ENCODE measurements at regions of chr16 and their contacts with region 1.

Region 1: GRCh38 chr16:10737068-10737625 is 6.5 kb upstream of the NUBP1 start:
- DNase-seq: peak; percentile 87
- ATAC-seq: peak; percentile 84
- H3K4me3 ChIP-seq: peak overlapping the region in 4 of 5 experiments; percentile 29 to 68 (median 46)
- H3K4me3 Mint-ChIP-seq: peak overlapping the region; percentile 80
- H3K27ac ChIP-seq: peak overlapping the region; percentile 63 to 70
- H3K27ac Mint-ChIP-seq: peak overlapping the region; percentile 85
- H3K4me1 ChIP-seq: peaks cover 23 to 29% of the 10 kb centered on the region in 2 donors
- H3K4me1 Mint-ChIP-seq: peaks cover 44% of the 10 kb centered on the region
- H3K27me3 ChIP-seq: no peaks in the 10 kb centered on the region
- H3K27me3 Mint-ChIP-seq: no peaks in the 10 kb centered on the region
- CTCF ChIP-seq: peak; percentile 96

Region 2: GRCh38 chr16:10256784-10257641 is 480.1 kb before region 1 on chr16:
- CTCF ChIA-PET with region 1: interaction called, 25 read pairs
- POLR2A ChIA-PET with region 1: no interaction called
- intact Hi-C with region 1: loop called (anchors 1 kb)
- DNase-seq: peak; percentile 83
- ATAC-seq: peak; percentile 90
- H3K4me3 ChIP-seq: peak overlapping the region in 1 of 5 experiments; percentile 18
- H3K4me3 Mint-ChIP-seq: peak overlapping the region; percentile 42
- H3K27ac ChIP-seq: peak overlapping the region in 1 of 2 donors; percentile 56
- H3K27ac Mint-ChIP-seq: peak overlapping the region; percentile 70
- H3K4me1 ChIP-seq: peaks cover 31 to 49% of the 10 kb centered on the region in 2 donors
- H3K4me1 Mint-ChIP-seq: peaks cover 45% of the 10 kb centered on the region
- H3K27me3 ChIP-seq: no peaks in the 10 kb centered on the region
- H3K27me3 Mint-ChIP-seq: no peaks in the 10 kb centered on the region
- CTCF ChIP-seq: peak; percentile 87

Region 3: DNA sequence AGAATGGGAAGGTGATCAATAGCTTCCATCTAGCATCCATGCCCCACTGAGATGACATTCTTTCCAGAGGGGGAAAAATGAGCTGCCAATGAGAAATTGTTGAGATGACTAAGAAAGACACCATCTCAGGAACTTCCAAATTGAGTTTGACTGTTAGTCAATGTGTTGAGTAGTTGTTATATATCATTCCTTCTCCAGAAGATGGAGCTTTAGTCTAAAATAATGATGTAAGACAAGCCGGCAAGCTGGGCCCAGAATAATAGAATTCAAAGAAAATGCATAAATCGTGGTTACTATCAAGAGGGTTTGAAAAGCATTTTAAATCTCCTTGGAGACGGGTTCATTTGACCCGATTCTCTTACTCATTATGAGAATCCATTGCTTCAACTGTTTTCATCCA is 422.3 kb before region 1 on chr16:
- CTCF ChIA-PET with region 1: interaction called, 7 read pairs
- POLR2A ChIA-PET with region 1: interaction called, 3 read pairs
- intact Hi-C with region 1: loop called (anchors 5 kb)
- DNase-seq: peak; percentile 47
- ATAC-seq: peak; percentile 46
- H3K4me3 ChIP-seq: no peak overlapping the region
- H3K4me3 Mint-ChIP-seq: peak overlapping the region; percentile 23
- H3K27ac ChIP-seq: no peak overlapping the region
- H3K27ac Mint-ChIP-seq: peak overlapping the region; percentile 73
- H3K4me1 ChIP-seq: peaks cover 18 to 32% of the 10 kb centered on the region in 2 donors
- H3K4me1 Mint-ChIP-seq: peaks cover 28% of the 10 kb centered on the region
- H3K27me3 ChIP-seq: no peaks in the 10 kb centered on the region
- H3K27me3 Mint-ChIP-seq: no peaks in the 10 kb centered on the region
- CTCF ChIP-seq: peak; percentile 33

Region 4: DNA sequence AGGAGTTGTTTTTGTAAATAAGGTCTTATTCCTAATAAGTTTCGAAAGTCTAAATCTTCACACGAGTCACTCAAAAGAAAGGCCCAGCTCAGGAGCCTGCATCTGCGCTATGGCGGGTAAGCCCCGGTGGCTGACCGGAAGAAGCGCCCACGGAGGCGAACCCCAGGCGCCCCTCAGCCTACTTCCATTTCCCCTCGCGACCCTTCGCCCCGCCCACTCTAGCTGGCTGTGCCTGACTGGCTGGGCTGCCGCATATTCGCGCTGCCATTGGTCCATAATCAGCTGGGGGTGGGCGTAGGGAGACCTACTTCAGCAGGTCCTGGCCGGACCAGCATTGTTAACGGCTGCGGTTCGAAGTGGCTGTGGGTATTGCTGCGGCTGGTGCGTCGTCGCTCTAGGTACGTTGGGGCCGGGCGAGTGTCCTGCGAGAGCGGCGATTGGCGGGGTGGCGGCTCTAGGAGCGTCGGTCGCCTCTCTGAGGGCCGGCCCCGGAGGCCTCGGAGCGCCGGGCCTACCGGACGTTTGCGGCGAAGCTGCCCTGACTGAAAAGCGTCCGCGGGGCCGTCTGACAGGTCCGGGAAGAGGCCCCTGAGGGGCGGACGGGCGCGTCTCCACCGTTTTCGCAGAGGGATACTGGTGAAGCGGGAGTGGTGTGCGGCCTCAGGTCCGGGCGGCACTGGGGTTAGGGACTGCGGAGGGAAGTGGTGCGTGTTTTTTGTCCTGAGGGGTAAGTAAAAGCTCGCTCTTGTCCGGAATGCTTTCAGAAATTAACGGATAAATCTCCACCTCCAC is 351.2 kb before region 1 on chr16 and contains the start of gene ATF7IP2:
- CTCF ChIA-PET with region 1: no interaction called
- POLR2A ChIA-PET with region 1: no interaction called
- intact Hi-C with region 1: loop called (anchors 5 kb)
- DNase-seq: peak; percentile 93
- ATAC-seq: peak; percentile 99
- H3K4me3 ChIP-seq: peak within 1 kb of the TSS; percentile 72 to 97 (median 93)
- H3K4me3 Mint-ChIP-seq: peak within 1 kb of the TSS; percentile 100
- H3K27ac ChIP-seq: peak within 1 kb of the TSS; percentile 72 to 86
- H3K27ac Mint-ChIP-seq: peak within 1 kb of the TSS; percentile 99
- H3K4me1 ChIP-seq: peaks cover 11 to 20% of the 10 kb centered on the region in 2 donors
- H3K4me1 Mint-ChIP-seq: peaks cover 45% of the 10 kb centered on the region
- H3K27me3 ChIP-seq: no peaks in the 10 kb centered on the region
- H3K27me3 Mint-ChIP-seq: no peaks in the 10 kb centered on the region
- CTCF ChIP-seq: no peak
- total RNA-seq, gene ATF7IP2: 63.7 and 67.5 TPM in 2 replicates

Region 5: GRCh38 chr16:10521681-10522274 is 215.4 kb before region 1 on chr16:
- CTCF ChIA-PET with region 1: interaction called, 203 read pairs
- POLR2A ChIA-PET with region 1: interaction called, 3 read pairs
- intact Hi-C with region 1: no loop called
- DNase-seq: peak; percentile 72
- ATAC-seq: peak; percentile 80
- H3K4me3 ChIP-seq: no peak overlapping the region
- H3K4me3 Mint-ChIP-seq: no peak overlapping the region
- H3K27ac ChIP-seq: no peak overlapping the region
- H3K27ac Mint-ChIP-seq: no peak overlapping the region
- H3K4me1 ChIP-seq: peaks cover 0 to 3% of the 10 kb centered on the region in 2 donors
- H3K4me1 Mint-ChIP-seq: peaks cover 2% of the 10 kb centered on the region
- H3K27me3 ChIP-seq: no peaks in the 10 kb centered on the region
- H3K27me3 Mint-ChIP-seq: no peaks in the 10 kb centered on the region
- CTCF ChIP-seq: peak; percentile 93

Region 6: GRCh38 chr16:10888320-10888937 is 151.3 kb after region 1 on chr16:
- CTCF ChIA-PET with region 1: interaction called, 13 read pairs
- POLR2A ChIA-PET with region 1: no interaction called
- intact Hi-C with region 1: no loop called
- DNase-seq: peak; percentile 69
- ATAC-seq: peak; percentile 15
- H3K4me3 ChIP-seq: peak overlapping the region; percentile 41 to 76 (median 47)
- H3K4me3 Mint-ChIP-seq: peak overlapping the region; percentile 81
- H3K27ac ChIP-seq: peak overlapping the region; percentile 74 to 85
- H3K27ac Mint-ChIP-seq: peak overlapping the region; percentile 87
- H3K4me1 ChIP-seq: peaks cover 98 to 100% of the 10 kb centered on the region in 2 donors
- H3K4me1 Mint-ChIP-seq: peaks cover 96% of the 10 kb centered on the region
- H3K27me3 ChIP-seq: no peaks in the 10 kb centered on the region
- H3K27me3 Mint-ChIP-seq: no peaks in the 10 kb centered on the region
- CTCF ChIP-seq: no peak

Region 7: DNA sequence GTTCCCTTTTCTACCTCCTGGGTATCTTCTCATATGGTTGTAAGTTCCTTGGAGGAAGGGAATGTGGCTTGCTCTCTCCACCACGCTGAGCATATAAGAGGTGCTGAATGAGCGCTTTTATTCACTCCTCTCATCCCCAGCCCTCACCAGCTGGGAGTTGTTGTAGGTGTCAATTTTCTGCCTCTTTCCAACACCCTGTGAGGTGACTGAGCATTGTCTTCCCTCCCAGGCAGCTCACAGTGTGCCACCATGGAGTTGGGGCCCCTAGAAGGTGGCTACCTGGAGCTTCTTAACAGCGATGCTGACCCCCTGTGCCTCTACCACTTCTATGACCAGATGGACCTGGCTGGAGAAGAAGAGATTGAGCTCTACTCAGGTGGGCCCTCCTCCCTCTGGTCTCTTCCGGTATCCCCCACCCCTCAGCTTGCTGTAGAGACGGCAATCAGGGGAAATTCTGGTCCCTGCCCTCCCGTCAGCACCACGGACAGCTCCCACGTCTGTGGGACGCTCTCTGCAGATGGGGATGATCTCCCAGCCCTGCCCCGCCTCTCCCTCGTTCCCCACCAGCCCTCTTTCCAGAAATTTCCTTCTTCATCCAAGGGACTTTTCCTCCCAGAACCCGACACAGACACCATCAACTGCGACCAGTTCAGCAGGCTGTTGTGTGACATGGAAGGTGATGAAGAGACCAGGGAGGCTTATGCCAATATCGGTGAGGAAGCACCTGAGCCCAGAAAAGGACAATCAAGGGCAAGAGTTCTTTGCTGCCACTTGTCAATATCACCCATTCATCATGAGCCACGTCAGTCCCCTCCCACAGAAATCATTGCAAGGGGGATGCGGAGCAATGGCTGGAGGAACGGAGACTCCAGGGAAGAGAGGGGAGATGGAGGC is 158.2 kb after region 1 on chr16:
- CTCF ChIA-PET with region 1: interaction called, 13 read pairs
- POLR2A ChIA-PET with region 1: no interaction called
- intact Hi-C with region 1: no loop called
- DNase-seq: peak; percentile 72
- ATAC-seq: no peak
- H3K4me3 ChIP-seq: no peak overlapping the region
- H3K4me3 Mint-ChIP-seq: peak overlapping the region; percentile 78
- H3K27ac ChIP-seq: peak overlapping the region; percentile 68 to 77
- H3K27ac Mint-ChIP-seq: peak overlapping the region; percentile 92
- H3K4me1 ChIP-seq: peaks cover 88 to 93% of the 10 kb centered on the region in 2 donors
- H3K4me1 Mint-ChIP-seq: peaks cover 93% of the 10 kb centered on the region
- H3K27me3 ChIP-seq: no peaks in the 10 kb centered on the region
- H3K27me3 Mint-ChIP-seq: no peaks in the 10 kb centered on the region
- CTCF ChIP-seq: no peak